ENCODE measurements at regions of chr19 and their contacts with region 1.

Region 1: DNA sequence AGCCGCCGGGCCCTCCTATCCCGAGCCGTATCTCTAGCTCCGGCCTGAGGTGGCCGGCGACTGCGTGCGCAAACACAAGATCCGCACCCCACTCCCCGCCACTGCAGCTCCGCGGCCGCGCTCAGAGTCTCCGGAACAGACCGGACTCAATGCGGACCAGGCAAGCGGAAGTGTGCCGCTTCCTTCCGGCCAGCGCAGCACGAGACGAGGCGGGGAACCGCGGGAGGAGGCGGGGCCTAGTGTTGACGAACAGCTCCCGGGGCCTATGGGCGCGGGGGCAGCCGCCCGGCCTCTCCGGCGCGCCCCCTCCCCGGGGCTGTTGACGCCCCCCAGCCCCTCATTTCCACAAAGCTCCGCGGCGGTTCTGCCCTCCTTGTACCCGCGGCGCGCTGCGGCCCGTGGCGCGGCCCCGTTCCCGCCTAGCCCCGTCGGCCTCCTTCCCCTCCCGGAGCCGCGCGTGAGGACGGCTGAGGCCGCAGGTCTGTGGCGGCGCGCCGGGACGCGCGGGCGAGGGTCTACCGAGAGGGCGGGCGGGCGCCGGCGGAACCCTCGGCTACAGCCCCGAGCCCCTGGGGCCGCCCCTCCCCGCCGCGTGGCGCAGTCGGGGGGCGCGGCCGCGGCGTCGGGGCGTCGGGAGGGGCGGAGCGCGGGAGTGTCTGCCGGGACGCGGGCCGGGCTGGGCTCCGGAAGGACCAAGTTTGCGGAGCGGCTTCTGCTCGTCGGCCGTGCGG is at the start of gene DPY19L3:
- DNase-seq: peak; percentile 95
- ATAC-seq: peak; percentile 92
- H3K4me3 Mint-ChIP-seq: peak within 1 kb of the TSS; percentile 86
- H3K27ac Mint-ChIP-seq: peak within 1 kb of the TSS; percentile 91
- H3K4me1 Mint-ChIP-seq: peaks cover 19% of the 10 kb centered on the region
- H3K27me3 Mint-ChIP-seq: no peaks in the 10 kb centered on the region
- total RNA-seq, gene DPY19L3: 15.7 to 17.5 TPM

Region 2: GRCh38 chr19:32345261-32346207 is 60.1 kb before region 1 on chr19 and contains the start of gene ZNF507:
- POLR2A ChIA-PET with region 1: interaction called, 22 read pairs
- DNase-seq: peak; percentile 94
- ATAC-seq: peak; percentile 87
- H3K4me3 Mint-ChIP-seq: peak within 1 kb of the TSS; percentile 98
- H3K27ac Mint-ChIP-seq: peak within 1 kb of the TSS; percentile 95
- H3K4me1 Mint-ChIP-seq: peaks cover 25% of the 10 kb centered on the region
- H3K27me3 Mint-ChIP-seq: peaks cover 12% of the 10 kb centered on the region
- total RNA-seq, gene ZNF507: 31.5 to 32.2 TPM

Region 3: DNA sequence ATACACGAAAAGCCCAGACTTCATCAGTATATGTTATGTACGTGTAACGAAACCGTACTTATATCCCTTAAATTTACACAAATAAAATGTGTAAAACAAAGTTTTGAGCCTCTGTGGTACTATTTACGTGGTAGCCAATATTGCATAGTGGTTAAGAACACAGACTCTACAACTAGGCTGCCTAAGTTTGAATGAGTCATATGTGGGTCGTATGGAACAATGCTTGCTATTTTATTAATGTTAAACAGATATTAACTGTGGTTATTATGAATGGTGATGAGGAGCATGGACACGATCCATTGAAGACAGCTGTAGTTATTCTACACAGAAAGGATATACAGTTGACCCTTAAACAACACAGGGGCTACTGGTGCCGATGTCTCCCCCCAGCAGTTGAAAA is 42.4 kb after region 1 on chr19:
- POLR2A ChIA-PET with region 1: no interaction called
- DNase-seq: no peak
- ATAC-seq: no peak
- H3K4me3 Mint-ChIP-seq: no peak overlapping the region
- H3K27ac Mint-ChIP-seq: no peak overlapping the region
- H3K4me1 Mint-ChIP-seq: no peaks in the 10 kb centered on the region
- H3K27me3 Mint-ChIP-seq: no peaks in the 10 kb centered on the region

Measured in activated naive CD8-positive, alpha-beta T cell treated with anti-CD3 and anti-CD28 coated beads, Interleukin-2, amount 10 ng/mL, durations not matched to agents 7 days and 5 days (primary cell).